ENCODE measurements at regions of chr17 and their contacts with region 1.

Region 1: DNA sequence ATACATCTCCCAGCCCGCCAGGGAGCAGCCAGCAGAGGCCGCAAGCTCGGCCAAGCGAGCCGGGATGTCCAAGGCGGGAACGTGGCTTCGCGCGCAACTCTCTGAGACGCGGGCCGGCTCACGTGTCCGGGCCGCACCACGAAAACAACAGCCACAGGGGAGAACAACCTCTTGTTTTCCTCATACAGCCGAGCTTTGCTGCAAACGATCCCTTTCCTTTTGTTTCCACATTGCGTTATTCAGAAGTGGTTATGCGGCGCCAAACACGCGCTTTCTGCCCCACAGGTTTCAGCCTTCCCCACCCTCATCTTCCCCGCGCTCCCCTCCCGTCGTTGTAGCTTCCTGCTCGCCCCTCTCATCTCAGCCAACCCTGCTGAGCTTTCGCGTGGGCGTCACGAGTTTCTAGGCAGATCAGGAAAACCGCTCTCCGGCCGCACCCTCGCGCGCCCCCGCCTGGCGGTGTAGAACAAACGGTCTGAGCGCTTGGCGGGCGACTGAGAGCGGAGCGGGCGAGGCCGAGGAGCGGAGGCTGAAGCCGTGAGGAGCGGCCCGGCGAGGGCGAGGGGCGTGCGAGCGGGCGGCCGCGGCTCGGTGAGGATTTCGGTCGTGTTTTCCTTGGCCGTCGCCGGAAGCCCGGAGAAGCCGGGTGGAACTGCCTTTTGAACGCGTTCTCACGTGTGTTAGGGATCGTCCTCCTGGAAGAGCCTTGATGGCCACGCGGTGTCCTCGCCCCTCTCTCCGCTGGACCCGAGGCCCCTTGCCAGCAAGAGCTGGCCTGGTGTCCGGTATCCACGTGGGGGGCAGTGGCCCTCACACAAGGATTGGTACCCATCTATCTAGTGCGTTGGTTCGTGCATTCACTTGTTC is 6.6 kb upstream of the SMARCD2 start:
- DNase-seq: peak; percentile 92
- H3K27ac ChIP-seq: peak overlapping the region; percentile 51
- CTCF ChIP-seq: peak; percentile 88

Region 2: DNA sequence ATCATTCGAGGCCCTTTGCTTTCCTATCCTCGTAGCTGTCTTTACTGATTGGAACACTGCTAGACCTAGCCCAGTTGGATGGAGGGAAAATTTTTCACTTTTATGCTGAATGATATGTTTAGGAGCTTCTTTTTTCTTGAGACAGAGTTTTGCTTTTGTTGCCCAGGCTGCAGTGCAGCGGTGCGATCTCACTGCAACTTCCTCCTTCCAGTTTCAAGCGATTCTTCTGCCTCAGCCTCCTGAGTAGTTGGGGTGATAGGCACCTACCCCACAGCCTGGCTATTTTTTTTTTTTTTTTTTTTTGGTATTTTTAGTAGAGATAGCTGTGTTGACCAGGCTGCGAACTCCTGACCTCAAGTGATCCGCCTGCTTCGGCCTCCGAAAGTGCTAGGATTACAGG is 39.1 kb before region 1 on chr17:
- CTCF ChIA-PET with region 1: no interaction called
- POLR2A ChIA-PET with region 1: no interaction called
- DNase-seq: no peak
- H3K27ac ChIP-seq: no peak overlapping the region
- CTCF ChIP-seq: no peak

Region 3: DNA sequence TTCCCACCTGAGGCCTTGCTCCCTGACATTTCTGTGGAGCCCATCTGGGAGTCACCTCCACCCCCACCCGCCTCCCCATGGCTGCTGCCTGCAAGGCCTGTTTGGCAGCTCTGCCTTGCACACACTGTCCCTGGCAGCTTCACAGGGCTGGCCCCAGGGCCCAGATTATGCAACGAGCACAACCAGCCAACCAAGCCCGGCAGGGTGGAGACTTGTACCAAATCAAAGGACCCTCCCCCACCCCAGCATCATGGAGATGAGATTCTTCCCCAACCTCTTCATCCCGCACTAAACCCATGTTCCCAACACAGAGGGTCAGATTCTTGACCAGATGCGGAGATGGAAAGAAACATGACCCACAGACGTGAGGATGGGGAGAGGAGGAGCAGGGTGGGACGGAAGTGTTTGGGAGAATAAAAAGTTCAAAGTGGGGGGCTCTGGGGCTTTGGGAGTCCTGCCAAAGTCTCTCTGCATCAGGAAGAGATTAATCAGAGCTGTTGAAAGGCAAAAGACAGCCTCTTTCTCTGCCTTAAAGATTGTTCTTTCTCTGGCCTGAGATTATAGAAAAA is 10.4 kb before region 1 on chr17:
- CTCF ChIA-PET with region 1: interaction called, 12 read pairs
- POLR2A ChIA-PET with region 1: no interaction called
- DNase-seq: peak; percentile 67
- H3K27ac ChIP-seq: peak overlapping the region; percentile 93
- CTCF ChIP-seq: no peak

Region 4: DNA sequence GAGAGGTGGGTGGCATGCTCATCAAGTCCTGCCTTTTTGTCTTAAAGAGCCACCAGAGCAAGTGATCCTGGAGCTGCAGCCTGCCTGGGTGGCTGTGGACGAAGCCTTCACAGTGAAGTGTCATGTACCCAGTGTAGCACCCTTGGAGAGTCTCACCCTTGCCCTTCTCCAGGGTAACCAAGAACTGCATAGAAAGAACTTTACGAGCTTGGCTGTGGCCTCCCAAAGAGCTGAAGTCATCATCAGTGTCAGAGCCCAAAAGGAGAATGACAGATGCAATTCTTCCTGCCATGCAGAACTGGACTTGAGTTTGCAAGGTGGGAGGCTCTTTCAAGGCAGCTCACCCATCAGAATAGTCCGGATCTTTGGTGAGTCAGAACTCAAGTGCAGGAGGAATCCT is 10.2 kb after region 1 on chr17:
- CTCF ChIA-PET with region 1: interaction called, 12 read pairs
- POLR2A ChIA-PET with region 1: no interaction called
- DNase-seq: no peak
- H3K27ac ChIP-seq: no peak overlapping the region
- CTCF ChIP-seq: no peak

Measured in RWPE1 (cell line).